Heart right ventricle (tissue), 16 donors: ENCODE measurements at regions of chr9 and their contacts with region 1.

Region 1: GRCh38 chr9:37200433-37201005 is 80.1 kb downstream of the ZCCHC7 start:
- DNase-seq: no peak
- ATAC-seq: peak in 1 of 8 donors; percentile 28
- H3K4me3 ChIP-seq: no peak overlapping the region
- H3K27ac ChIP-seq: no peak overlapping the region
- H3K4me1 ChIP-seq: peaks cover 0 to 47% (median 31%) of the 10 kb centered on the region in 9 donors
- H3K27me3 ChIP-seq: no peaks in the 10 kb centered on the region
- CTCF ChIP-seq: no peak

Region 2: GRCh38 chr9:37100327-37100726 is 100.2 kb before region 1 on chr9:
- intact Hi-C with region 1: no loop called
- DNase-seq: no peak
- ATAC-seq: no peak
- H3K4me3 ChIP-seq: no peak overlapping the region
- H3K27ac ChIP-seq: no peak overlapping the region
- H3K4me1 ChIP-seq: no peaks in the 10 kb centered on the region
- H3K27me3 ChIP-seq: peaks cover 0 to 16% (median 0%) of the 10 kb centered on the region in 7 donors
- CTCF ChIP-seq: no peak

Region 3: GRCh38 chr9:37167456-37168047 is 33.0 kb before region 1 on chr9:
- intact Hi-C with region 1: loop called in 1 of 10 experiments (anchors 5 kb)
- DNase-seq: no peak
- ATAC-seq: no peak
- H3K4me3 ChIP-seq: no peak overlapping the region
- H3K27ac ChIP-seq: no peak overlapping the region
- H3K4me1 ChIP-seq: no peaks in the 10 kb centered on the region
- H3K27me3 ChIP-seq: no peaks in the 10 kb centered on the region
- CTCF ChIP-seq: no peak